A549 (cell line): ENCODE measurements at regions of chr10 and their contacts with region 1.

Region 1: DNA sequence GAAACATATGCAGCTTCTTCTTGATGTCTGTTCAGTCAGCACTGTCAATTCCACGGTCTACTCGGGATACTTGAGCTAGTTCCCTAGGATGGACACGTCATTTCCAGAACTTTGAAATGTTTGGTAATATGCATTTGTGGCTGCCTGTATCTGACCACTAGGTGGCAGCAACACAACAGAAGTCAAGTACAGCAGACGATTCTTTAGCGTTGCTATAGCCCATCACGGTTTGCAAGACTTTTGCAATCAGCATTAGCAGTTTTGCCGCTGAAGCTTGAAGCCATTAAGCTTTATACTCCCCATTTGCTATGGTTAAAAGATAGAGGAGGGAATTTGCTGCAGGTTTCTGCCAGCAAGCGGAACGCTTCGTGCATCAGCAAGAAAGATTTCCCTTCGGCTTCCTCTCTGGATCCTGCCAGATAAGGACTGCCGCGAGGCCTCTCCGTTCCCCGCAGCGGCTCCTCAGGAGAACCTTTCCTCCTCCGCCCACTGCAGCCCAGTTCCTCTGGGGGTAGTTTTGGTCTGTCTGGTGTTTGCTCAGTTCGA is 63.5 kb downstream of the ABCC2 start:
- DNase-seq: peak; percentile 60 to 92
- ATAC-seq: peak; percentile 72 to 78
- H3K4me3 ChIP-seq: no peak overlapping the region
- H3K27ac ChIP-seq: peak overlapping the region in 1 of 2 experiments; percentile 31; a peak in 2 of 6 replicates
- H3K4me1 ChIP-seq: peaks cover 56% of the 10 kb centered on the region
- CTCF ChIP-seq: peak; percentile 92
- EP300 ChIP-seq: no peak
- POLR2A ChIP-seq: no peak
- RAD21 ChIP-seq: peak; percentile 81 to 82

Region 2: GRCh38 chr10:99779335-99779734 is 66.6 kb before region 1 on chr10:
- CTCF ChIA-PET with region 1: no interaction called
- POLR2A ChIA-PET with region 1: interaction called, 10 read pairs
- DNase-seq: peak in 1 of 2 experiments; percentile 82
- ATAC-seq: peak; percentile 58 to 60
- H3K4me3 ChIP-seq: peak overlapping the region; percentile 37
- H3K27ac ChIP-seq: peak overlapping the region; percentile 98 to 100
- H3K4me1 ChIP-seq: peaks cover 66% of the 10 kb centered on the region
- CTCF ChIP-seq: no peak
- EP300 ChIP-seq: no peak
- POLR2A ChIP-seq: no peak
- RAD21 ChIP-seq: no peak

Region 3: GRCh38 chr10:99827936-99828335 is 18.0 kb before region 1 on chr10:
- CTCF ChIA-PET with region 1: interaction called, 47 read pairs
- POLR2A ChIA-PET with region 1: no interaction called
- DNase-seq: no peak
- ATAC-seq: no peak
- H3K4me3 ChIP-seq: no peak overlapping the region
- H3K27ac ChIP-seq: no peak overlapping the region
- H3K4me1 ChIP-seq: peaks cover 30% of the 10 kb centered on the region
- CTCF ChIP-seq: no peak
- EP300 ChIP-seq: no peak
- POLR2A ChIP-seq: no peak
- RAD21 ChIP-seq: no peak

Region 4: GRCh38 chr10:99860466-99860865 is 14.6 kb after region 1 on chr10:
- CTCF ChIA-PET with region 1: interaction called, 89 read pairs
- POLR2A ChIA-PET with region 1: no interaction called
- DNase-seq: no peak
- ATAC-seq: no peak
- H3K4me3 ChIP-seq: no peak overlapping the region
- H3K27ac ChIP-seq: no peak overlapping the region
- H3K4me1 ChIP-seq: no peaks in the 10 kb centered on the region
- CTCF ChIP-seq: no peak
- EP300 ChIP-seq: no peak
- POLR2A ChIP-seq: no peak
- RAD21 ChIP-seq: no peak

Region 5: GRCh38 chr10:99880080-99880835 is 34.3 kb after region 1 on chr10:
- CTCF ChIA-PET with region 1: interaction called, 30 read pairs
- POLR2A ChIA-PET with region 1: no interaction called
- DNase-seq: no peak
- ATAC-seq: no peak
- H3K4me3 ChIP-seq: no peak overlapping the region
- H3K27ac ChIP-seq: no peak overlapping the region
- H3K4me1 ChIP-seq: no peaks in the 10 kb centered on the region
- CTCF ChIP-seq: no peak
- EP300 ChIP-seq: no peak
- POLR2A ChIP-seq: no peak
- RAD21 ChIP-seq: no peak

Region 6: GRCh38 chr10:99906470-99906869 is 60.6 kb after region 1 on chr10:
- CTCF ChIA-PET with region 1: interaction called, 21 read pairs
- POLR2A ChIA-PET with region 1: no interaction called
- DNase-seq: peak; percentile 79 to 88
- ATAC-seq: peak; percentile 89 to 97
- H3K4me3 ChIP-seq: no peak overlapping the region
- H3K27ac ChIP-seq: peak overlapping the region; percentile 46 to 59
- H3K4me1 ChIP-seq: peaks cover 21% of the 10 kb centered on the region
- CTCF ChIP-seq: peak; percentile 50
- EP300 ChIP-seq: no peak
- POLR2A ChIP-seq: no peak
- RAD21 ChIP-seq: peak; percentile 69 to 87

Region 7: GRCh38 chr10:100100651-100101184 is 254.8 kb after region 1 on chr10:
- CTCF ChIA-PET with region 1: interaction called, 10 read pairs
- POLR2A ChIA-PET with region 1: no interaction called
- DNase-seq: peak; percentile 56 to 65
- ATAC-seq: peak; percentile 90 to 94
- H3K4me3 ChIP-seq: no peak overlapping the region
- H3K27ac ChIP-seq: no peak overlapping the region
- H3K4me1 ChIP-seq: peaks cover 15% of the 10 kb centered on the region; the same call in 2 of the 3 replicates
- CTCF ChIP-seq: peak; percentile 64
- EP300 ChIP-seq: no peak
- POLR2A ChIP-seq: no peak
- RAD21 ChIP-seq: peak; percentile 75 to 86

Region 8: GRCh38 chr10:100683545-100684300 is 837.8 kb after region 1 on chr10:
- CTCF ChIA-PET with region 1: no interaction called
- POLR2A ChIA-PET with region 1: no interaction called
- DNase-seq: no peak
- ATAC-seq: no peak
- H3K4me3 ChIP-seq: no peak overlapping the region
- H3K27ac ChIP-seq: no peak overlapping the region
- H3K4me1 ChIP-seq: peaks cover 4% of the 10 kb centered on the region; the same call in 1 of the 3 replicates
- CTCF ChIP-seq: no peak
- EP300 ChIP-seq: no peak
- POLR2A ChIP-seq: no peak
- RAD21 ChIP-seq: no peak